ENCODE measurements at regions of chrX and their contacts with region 1.

Region 1: DNA sequence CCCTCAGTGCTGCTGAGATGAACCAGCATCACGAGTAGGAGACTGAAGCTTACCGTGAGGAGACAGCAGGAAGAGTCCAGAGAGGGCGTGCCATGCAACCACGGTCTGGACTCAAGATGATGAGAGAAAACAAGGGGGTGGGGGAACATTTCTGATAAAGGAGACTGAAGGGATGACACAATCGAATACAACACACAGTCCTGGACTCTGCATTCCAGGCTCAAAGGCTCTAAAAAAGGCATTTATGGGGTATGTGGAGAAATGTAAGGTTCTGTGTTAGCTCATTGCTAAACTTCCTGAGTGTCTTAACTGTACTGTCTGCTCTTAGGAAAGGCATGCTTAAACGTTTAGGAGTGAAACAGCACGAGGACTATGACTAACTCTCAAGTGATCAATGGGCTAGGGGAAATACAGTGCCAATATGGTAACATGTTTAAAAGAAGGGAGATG is 20.6 kb upstream of the IRAK1 start:
- DNase-seq: peak; percentile 79 to 91 (median 89)
- H3K4me3 ChIP-seq: no peak overlapping the region
- H3K4me3 Mint-ChIP-seq: peak overlapping the region in 1 of 2 donors; percentile 63
- H3K27ac ChIP-seq: peak overlapping the region; percentile 84 to 90
- H3K27ac Mint-ChIP-seq: peak overlapping the region; percentile 84 to 99 (median 95)
- H3K4me1 ChIP-seq: peaks cover 31 to 35% of the 10 kb centered on the region in 2 donors
- H3K4me1 Mint-ChIP-seq: peaks cover 52% of the 10 kb centered on the region
- H3K27me3 ChIP-seq: peaks cover 0 to 22% of the 10 kb centered on the region in 2 donors
- H3K27me3 Mint-ChIP-seq: peaks cover 0 to 38% (median 0%) of the 10 kb centered on the region in 3 donors
- CTCF ChIP-seq: no peak

Region 2: GRCh38 chrX:153922932-153923857 is 117.1 kb before region 1 on chrX:
- intact Hi-C with region 1: no loop called
- DNase-seq: peak in 1 of 3 donors; percentile 11
- H3K4me3 ChIP-seq: peak overlapping the region in 2 of 3 experiments; percentile 3 to 89
- H3K4me3 Mint-ChIP-seq: peak overlapping the region; percentile 86 to 95
- H3K27ac ChIP-seq: peak overlapping the region in 1 of 2 donors; percentile 41
- H3K27ac Mint-ChIP-seq: peak overlapping the region in 5 of 7 donors; percentile 34 to 72 (median 45)
- H3K4me1 ChIP-seq: peaks cover 40 to 67% of the 10 kb centered on the region in 2 donors
- H3K4me1 Mint-ChIP-seq: peaks cover 27% of the 10 kb centered on the region
- H3K27me3 ChIP-seq: no peaks in the 10 kb centered on the region
- H3K27me3 Mint-ChIP-seq: peaks cover 0 to 43% (median 0%) of the 10 kb centered on the region in 3 donors
- CTCF ChIP-seq: peak; percentile 46

Region 3: GRCh38 chrX:154019633-154020528 is 20.5 kb before region 1 on chrX and contains the start of gene IRAK1:
- intact Hi-C with region 1: loop called in 1 of 2 experiments (anchors 1 kb)
- DNase-seq: peak; percentile 63 to 78 (median 63)
- H3K4me3 ChIP-seq: peak within 1 kb of the TSS; percentile 61 to 79 (median 69)
- H3K4me3 Mint-ChIP-seq: peak within 1 kb of the TSS; percentile 92 to 94
- H3K27ac ChIP-seq: peak within 1 kb of the TSS; percentile 97 to 99
- H3K27ac Mint-ChIP-seq: peak within 1 kb of the TSS; percentile 95 to 99 (median 98)
- H3K4me1 ChIP-seq: peaks cover 28 to 33% of the 10 kb centered on the region in 2 donors
- H3K4me1 Mint-ChIP-seq: peaks cover 32% of the 10 kb centered on the region
- H3K27me3 ChIP-seq: peaks cover 0 to 2% of the 10 kb centered on the region in 2 donors
- H3K27me3 Mint-ChIP-seq: peaks cover 0 to 48% (median 0%) of the 10 kb centered on the region in 3 donors
- CTCF ChIP-seq: no peak
- polyA plus RNA-seq, gene IRAK1: 47.8 to 109 (median 49.5) TPM

Measured in CD14-positive monocyte (primary cell).